Cardiac septum (tissue), 1 donor: ENCODE measurements at regions of chr6 and their contacts with region 1.

Region 1: DNA sequence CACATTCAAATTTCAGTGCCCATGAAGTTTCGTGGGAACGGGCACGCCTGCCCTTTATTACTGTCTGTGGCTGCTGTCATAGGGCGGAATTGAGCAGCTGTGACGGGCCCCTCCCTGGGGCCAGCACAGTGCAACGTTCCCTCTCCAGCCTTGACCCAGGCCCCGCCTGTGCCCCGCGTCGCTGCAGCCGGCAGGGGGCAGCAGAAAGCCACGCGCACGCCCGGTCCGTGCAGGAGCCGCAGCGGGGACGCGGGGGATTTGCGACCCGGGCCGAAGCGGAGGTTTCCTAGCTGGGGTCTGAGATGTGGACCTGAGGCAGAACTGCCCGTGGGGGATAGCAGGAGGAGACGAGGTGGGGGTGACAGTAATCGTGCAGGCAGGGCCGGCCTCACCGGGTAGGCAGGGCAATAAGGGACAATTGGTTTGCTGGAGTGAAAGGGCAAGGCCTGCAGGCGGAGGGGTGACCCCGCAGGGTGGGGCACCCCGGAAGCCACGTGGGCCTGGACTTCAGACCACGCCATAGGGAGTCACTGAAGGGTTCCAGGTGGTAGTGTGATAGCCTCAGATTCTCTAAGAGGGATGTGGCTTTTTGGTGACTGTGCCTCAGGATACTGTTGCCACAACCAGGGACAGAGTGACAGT is 54.4 kb downstream of the SYTL3 start:
- DNase-seq: peak; percentile 92

Region 2: GRCh38 chr6:158644231-158645063 is 59.9 kb before region 1 on chr6 and contains the start of gene DYNLT1:
- intact Hi-C with region 1: loop called (anchors 5 kb)
- DNase-seq: peak; percentile 97
- total RNA-seq, gene DYNLT1: 131 TPM

Region 3: DNA sequence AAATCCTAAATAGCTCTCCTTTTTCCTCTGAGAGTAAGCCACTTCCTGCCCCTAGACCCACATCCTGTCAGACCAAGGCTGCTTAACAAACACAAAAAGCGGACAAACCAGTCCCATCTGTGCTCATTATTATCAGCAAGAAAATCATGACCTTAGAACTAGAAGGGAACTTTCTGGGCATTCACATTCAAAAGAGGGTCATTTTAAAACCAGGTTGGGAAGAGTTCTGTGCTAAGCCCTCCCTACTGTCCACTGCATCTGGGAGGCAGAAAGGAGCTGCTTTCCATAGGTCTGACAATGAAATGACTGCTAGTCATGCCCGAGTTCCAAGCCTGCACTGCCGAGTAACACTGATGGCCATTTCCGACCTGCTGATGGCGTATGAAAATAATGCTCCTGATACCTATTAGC is 99.4 kb after region 1 on chr6:
- intact Hi-C with region 1: loop called (anchors 5 kb)
- DNase-seq: no peak

Region 4: GRCh38 chr6:158819213-158819909 is 115.1 kb after region 1 on chr6 and contains the start of gene EZR:
- intact Hi-C with region 1: loop called (anchors 5 kb)
- DNase-seq: peak; percentile 87
- total RNA-seq, gene EZR: 141 TPM

Region 5: GRCh38 chr6:158869826-158870648 is 165.7 kb after region 1 on chr6:
- intact Hi-C with region 1: loop called (anchors 5 kb)
- DNase-seq: peak; percentile 93

Region 6: DNA sequence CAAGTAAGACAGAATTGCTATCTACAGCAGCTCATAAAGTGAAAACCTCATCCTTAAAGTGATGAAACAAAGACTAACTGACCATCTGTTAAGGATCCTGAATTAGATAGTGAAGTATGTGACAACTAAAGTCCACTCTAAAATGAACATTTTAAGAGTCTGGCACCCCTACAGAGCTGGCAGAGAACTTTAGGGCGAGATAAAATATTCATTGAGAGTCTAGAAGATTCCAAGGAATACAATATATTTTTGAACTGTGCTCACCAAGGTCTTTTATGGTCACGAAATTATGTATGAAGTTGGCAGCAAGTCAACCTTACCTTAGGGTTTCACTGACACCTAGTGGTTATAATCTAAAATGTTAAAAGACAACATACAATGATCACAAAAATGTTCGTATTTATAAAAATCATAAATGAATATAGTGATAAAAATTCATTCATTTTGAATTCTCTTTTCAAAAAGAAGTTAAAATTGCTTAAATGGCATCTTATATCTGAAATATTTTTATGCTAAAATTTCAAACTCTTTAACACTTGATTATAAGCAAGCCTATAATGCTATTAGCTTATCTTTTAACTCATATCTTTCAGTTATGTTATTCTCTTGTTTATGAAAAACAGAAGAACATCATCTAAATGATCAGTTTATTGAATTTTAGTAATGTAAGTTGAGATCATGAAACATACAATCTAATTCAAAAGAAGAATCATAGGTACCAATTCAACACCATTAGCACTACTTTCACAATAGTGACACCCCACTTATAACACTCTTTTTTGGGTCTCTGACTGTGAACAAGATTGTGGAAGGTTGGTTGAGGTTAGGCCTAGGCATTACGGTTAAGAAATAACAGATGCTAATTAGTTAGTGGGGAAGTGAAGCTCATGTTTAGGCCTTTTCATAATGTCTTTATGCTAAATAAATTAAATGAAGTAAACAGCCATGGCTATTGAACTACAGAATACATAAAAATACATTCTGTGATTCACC is 268.2 kb after region 1 on chr6:
- intact Hi-C with region 1: loop called (anchors 2 kb)
- DNase-seq: no peak

Region 7: DNA sequence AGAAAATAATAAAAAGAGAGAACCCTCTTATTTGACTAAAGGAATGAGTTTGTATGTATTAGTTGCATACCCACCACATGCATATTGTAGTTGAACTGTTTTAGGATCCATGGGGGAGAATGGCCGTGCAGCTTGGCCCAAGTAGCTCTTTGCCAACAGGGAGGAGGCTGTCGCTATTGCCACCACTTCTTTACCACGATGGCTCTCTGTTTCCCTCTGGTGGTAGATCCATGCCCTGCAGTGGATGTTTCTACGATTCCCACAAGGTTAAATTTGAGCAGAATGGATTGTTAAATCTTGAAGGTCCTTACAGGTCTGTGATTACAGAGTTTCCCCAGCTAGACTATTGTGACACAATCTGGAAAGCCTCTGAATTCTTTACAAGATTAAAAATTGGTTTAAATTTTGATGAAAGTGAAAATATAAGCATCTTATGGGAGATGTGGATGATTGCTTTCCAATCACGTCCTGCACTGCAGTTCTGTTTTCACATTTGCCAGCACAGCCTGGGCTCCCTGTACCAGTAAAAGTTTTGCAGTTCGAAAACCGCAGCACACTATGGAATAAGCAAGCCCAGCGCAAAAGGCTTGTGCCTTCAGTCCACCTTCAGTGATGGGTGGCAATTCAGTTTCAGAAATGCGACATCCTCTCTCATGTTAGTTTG is 430.5 kb after region 1 on chr6:
- intact Hi-C with region 1: loop called (anchors 10 kb)
- DNase-seq: no peak